ENCODE measurements at regions of chr3 and their contacts with region 1.

Region 1: DNA sequence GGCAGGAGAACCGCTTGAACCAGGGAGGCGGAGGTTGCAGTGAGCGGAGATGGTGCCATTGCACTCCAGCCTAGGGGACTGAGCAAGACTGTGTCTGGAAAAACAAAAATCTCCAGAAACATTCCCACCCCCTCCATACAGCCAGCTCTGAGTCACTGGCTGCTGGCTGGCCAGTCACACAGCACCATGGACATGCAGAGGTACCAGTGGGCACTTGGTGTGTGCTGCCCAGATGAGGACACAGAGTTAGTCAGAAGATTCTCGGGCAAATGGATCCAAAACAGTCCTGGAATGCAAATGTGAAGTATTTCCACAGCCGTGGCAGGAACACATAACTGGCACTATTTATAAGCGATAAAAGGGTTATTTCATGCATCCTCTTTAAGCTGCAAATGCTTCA is 44.6 kb downstream of the BDH1 start:
- DNase-seq: peak; percentile 59
- H3K4me3 ChIP-seq: no peak overlapping the region
- H3K27ac ChIP-seq: no peak overlapping the region
- H3K4me1 ChIP-seq: peaks cover 30% of the 10 kb centered on the region
- H3K27me3 ChIP-seq: no peaks in the 10 kb centered on the region
- CTCF ChIP-seq: no peak

Region 2: DNA sequence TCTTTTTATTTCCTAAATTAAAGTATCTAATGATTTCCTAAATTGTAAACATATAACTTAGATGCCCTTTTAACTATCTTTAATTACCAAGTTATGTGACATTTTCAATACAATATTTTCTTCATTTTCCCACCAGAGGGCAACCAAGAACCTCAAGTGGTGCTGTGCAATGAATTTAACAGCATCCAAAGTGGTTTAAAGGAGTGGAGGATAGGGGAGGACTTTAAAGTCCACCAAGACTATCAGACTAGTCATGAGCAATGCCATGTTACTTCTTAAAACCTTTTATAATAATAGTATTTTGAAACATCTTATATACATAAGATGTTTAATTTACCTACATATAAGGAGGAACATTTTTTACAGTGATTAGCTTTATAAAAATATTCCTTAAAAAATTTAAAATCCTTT is 287.1 kb before region 1 on chr3:
- CTCF ChIA-PET with region 1: no interaction called
- dilution Hi-C with region 1: no loop called
- in situ Hi-C with region 1: no loop called
- intact Hi-C with region 1: loop called (anchors 1 kb)
- DNase-seq: peak; percentile 37
- H3K4me3 ChIP-seq: no peak overlapping the region
- H3K27ac ChIP-seq: no peak overlapping the region
- H3K4me1 ChIP-seq: peaks cover 10% of the 10 kb centered on the region
- H3K27me3 ChIP-seq: no peaks in the 10 kb centered on the region
- CTCF ChIP-seq: peak; percentile 46 to 63

Region 3: GRCh38 chr3:197242784-197243432 is 268.2 kb before region 1 on chr3:
- CTCF ChIA-PET with region 1: no interaction called
- dilution Hi-C with region 1: loop called (anchors 5 kb)
- in situ Hi-C with region 1: no loop called
- intact Hi-C with region 1: no loop called
- DNase-seq: peak; percentile 51
- H3K4me3 ChIP-seq: no peak overlapping the region
- H3K27ac ChIP-seq: no peak overlapping the region
- H3K4me1 ChIP-seq: no peaks in the 10 kb centered on the region
- H3K27me3 ChIP-seq: no peaks in the 10 kb centered on the region
- CTCF ChIP-seq: no peak

Measured in mammary epithelial cell (primary cell).